ENCODE measurements at regions of chr17 and their contacts with region 1.

Region 1: GRCh38 chr17:7867881-7868329 is 10.1 kb downstream of the CYB5D1 start:
- DNase-seq: peak; percentile 42
- H3K4me3 Mint-ChIP-seq: peak overlapping the region; percentile 39
- H3K27ac Mint-ChIP-seq: peak overlapping the region; percentile 65
- H3K4me1 Mint-ChIP-seq: peaks cover 33% of the 10 kb centered on the region
- H3K27me3 Mint-ChIP-seq: no peaks in the 10 kb centered on the region

Region 2: GRCh38 chr17:7892750-7893149 is 24.8 kb after region 1 on chr17:
- CTCF ChIA-PET with region 1: no interaction called
- POLR2A ChIA-PET with region 1: interaction called, 15 read pairs
- DNase-seq: no peak
- H3K4me3 Mint-ChIP-seq: no peak overlapping the region
- H3K27ac Mint-ChIP-seq: no peak overlapping the region
- H3K4me1 Mint-ChIP-seq: peaks cover 28% of the 10 kb centered on the region
- H3K27me3 Mint-ChIP-seq: no peaks in the 10 kb centered on the region

Measured in activated CD4-positive, alpha-beta T cell treated with anti-CD3 and anti-CD28 coated beads, Interleukin-2, amount 10 ng/mL, durations not matched to agents 7 days and 5 days (primary cell).